ENCODE measurements at regions of chr13 and their contacts with region 1.

Region 1: DNA sequence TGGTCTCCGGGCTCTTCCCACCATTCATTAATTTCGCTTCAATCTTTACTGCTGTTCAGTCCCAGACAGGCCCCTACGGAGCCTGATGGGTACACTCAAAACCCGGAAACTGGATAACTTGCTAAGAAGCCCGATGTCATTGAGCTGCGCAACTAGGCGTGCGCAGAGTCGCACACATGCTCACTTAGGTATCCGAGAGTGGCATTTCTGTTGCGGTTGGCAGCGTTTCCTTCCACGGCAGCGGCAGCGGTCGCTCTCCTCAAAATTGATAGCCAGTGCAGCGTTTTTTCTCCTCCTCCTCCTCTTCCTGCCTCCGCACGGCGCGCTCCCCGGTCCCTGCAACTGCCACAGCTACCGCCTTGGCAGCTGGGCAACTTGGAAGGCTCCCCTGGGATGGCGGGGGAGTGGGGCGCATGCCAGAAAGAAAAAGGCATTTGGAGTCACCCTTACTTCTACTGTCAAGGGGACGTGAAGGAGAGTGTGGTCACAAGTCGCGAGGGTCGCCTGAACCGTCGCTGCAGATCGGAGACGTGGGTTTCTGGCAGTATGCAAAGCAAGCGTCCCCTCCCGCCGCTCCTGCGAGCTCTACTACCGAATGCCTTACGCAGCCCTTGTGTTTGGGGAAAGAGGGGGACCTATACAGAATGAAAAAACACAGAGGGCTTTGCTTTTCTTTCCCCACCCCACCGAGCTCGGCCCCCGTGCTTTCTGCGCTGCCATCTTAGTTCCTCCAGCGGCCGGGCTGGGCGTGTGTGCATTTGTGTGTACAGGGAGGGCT is 2.4 kb upstream of the MYCBP2 start:
- DNase-seq: peak; percentile 96
- ATAC-seq: peak; percentile 60
- H3K4me3 ChIP-seq: peak overlapping the region; percentile 80 to 99 (median 92)
- H3K4me3 Mint-ChIP-seq: peak overlapping the region; percentile 94
- H3K27ac ChIP-seq: peak overlapping the region; percentile 84 to 91
- H3K27ac Mint-ChIP-seq: peak overlapping the region; percentile 97
- H3K4me1 ChIP-seq: peaks cover 31 to 39% of the 10 kb centered on the region in 2 donors
- H3K4me1 Mint-ChIP-seq: peaks cover 57% of the 10 kb centered on the region
- H3K27me3 ChIP-seq: no peaks in the 10 kb centered on the region
- H3K27me3 Mint-ChIP-seq: no peaks in the 10 kb centered on the region
- CTCF ChIP-seq: no peak

Region 2: GRCh38 chr13:76886292-76887075 is 442.8 kb before region 1 on chr13 and contains the start of gene KCTD12:
- CTCF ChIA-PET with region 1: no interaction called
- POLR2A ChIA-PET with region 1: no interaction called
- intact Hi-C with region 1: loop called (anchors 10 kb)
- DNase-seq: peak; percentile 90
- ATAC-seq: peak; percentile 79
- H3K4me3 ChIP-seq: peak within 1 kb of the TSS; percentile 45 to 67 (median 64)
- H3K4me3 Mint-ChIP-seq: peak within 1 kb of the TSS; percentile 96
- H3K27ac ChIP-seq: peak within 1 kb of the TSS in 1 of 2 donors; percentile 40
- H3K27ac Mint-ChIP-seq: peak within 1 kb of the TSS; percentile 88
- H3K4me1 ChIP-seq: peaks cover 7 to 24% of the 10 kb centered on the region in 2 donors
- H3K4me1 Mint-ChIP-seq: peaks cover 28% of the 10 kb centered on the region
- H3K27me3 ChIP-seq: peaks cover 0 to 3% (median 0%) of the 10 kb centered on the region in 4 experiments
- H3K27me3 Mint-ChIP-seq: peaks cover 3% of the 10 kb centered on the region
- CTCF ChIP-seq: peak; percentile 41
- total RNA-seq, gene KCTD12: 6.2 TPM in 2 replicates

Region 3: DNA sequence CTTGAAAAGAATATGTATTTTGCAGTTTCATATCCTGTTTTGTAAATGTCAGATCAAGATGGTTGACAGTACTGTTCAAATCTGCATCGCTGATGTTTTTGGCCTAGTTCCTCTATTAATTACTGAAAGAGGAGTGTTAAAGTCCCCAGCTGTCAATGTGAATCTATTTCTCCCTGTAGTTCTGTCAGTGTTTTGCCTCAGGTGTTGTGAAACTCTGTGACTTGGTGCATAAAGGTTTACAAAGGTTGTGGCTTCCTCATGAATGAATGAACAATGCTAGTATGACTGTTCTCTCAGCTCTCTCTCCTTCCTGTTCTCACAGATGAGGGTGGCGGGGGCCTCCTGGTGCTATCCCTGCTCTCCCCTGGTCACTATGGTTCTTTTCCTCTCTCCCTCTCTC is 144.9 kb before region 1 on chr13:
- CTCF ChIA-PET with region 1: no interaction called
- POLR2A ChIA-PET with region 1: no interaction called
- intact Hi-C with region 1: loop called (anchors 1 kb)
- DNase-seq: peak; percentile 79
- ATAC-seq: peak; percentile 94
- H3K4me3 ChIP-seq: no peak overlapping the region
- H3K4me3 Mint-ChIP-seq: peak overlapping the region; percentile 48
- H3K27ac ChIP-seq: peak overlapping the region; percentile 47 to 78
- H3K27ac Mint-ChIP-seq: peak overlapping the region; percentile 90
- H3K4me1 ChIP-seq: peaks cover 12 to 15% of the 10 kb centered on the region in 2 donors
- H3K4me1 Mint-ChIP-seq: peaks cover 23% of the 10 kb centered on the region
- H3K27me3 ChIP-seq: no peaks in the 10 kb centered on the region
- H3K27me3 Mint-ChIP-seq: no peaks in the 10 kb centered on the region
- CTCF ChIP-seq: no peak

Region 4: DNA sequence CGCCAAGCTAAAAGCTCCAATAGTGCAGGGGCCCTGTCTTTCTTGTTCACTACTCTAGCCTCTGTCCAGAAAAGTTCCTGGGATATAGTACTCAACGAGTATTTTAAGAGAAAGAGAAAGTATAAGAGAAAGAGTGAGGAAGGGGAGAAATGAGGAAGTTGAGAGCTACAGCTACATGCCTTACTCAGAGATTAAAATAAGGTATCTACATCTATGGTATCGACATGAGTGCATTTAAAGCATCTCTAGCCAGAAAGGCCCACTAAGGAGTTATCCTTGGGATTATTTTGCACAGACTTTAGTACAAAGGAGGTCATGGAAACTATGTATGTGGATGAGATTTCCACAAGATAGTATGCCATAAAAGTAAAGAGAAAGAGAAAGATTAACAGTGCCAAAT is 30.9 kb before region 1 on chr13:
- CTCF ChIA-PET with region 1: interaction called, 24 read pairs
- POLR2A ChIA-PET with region 1: interaction called, 4 read pairs
- intact Hi-C with region 1: loop called (anchors 2 kb)
- DNase-seq: peak; percentile 69
- ATAC-seq: peak; percentile 80
- H3K4me3 ChIP-seq: peak overlapping the region; percentile 35 to 61 (median 43)
- H3K4me3 Mint-ChIP-seq: peak overlapping the region; percentile 83
- H3K27ac ChIP-seq: peak overlapping the region; percentile 66 to 71
- H3K27ac Mint-ChIP-seq: peak overlapping the region; percentile 85
- H3K4me1 ChIP-seq: peaks cover 40 to 60% of the 10 kb centered on the region in 2 donors
- H3K4me1 Mint-ChIP-seq: peaks cover 64% of the 10 kb centered on the region
- H3K27me3 ChIP-seq: no peaks in the 10 kb centered on the region
- H3K27me3 Mint-ChIP-seq: no peaks in the 10 kb centered on the region
- CTCF ChIP-seq: no peak

Region 5: DNA sequence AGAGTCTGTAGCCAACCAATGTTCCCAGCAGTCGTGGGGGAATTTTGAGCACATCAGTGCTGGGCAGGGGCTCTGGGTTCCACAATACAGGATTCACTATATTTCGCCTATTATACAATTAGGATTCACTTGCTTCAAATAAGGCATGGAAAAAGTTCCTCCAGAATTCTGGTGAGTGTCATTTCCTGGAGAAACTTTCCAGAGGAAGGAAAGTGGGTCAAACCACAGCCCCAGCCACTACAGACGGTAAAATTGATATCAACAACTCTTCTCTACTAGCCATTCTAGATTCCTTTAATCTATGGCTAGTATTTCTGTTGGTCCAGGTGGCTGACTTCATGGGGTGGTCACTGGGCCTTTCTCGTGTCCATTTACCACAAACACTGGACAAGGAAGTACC is 12.9 kb before region 1 on chr13:
- CTCF ChIA-PET with region 1: interaction called, 12 read pairs
- POLR2A ChIA-PET with region 1: interaction called, 3 read pairs
- intact Hi-C with region 1: no loop called
- DNase-seq: no peak
- ATAC-seq: no peak
- H3K4me3 ChIP-seq: no peak overlapping the region
- H3K4me3 Mint-ChIP-seq: no peak overlapping the region
- H3K27ac ChIP-seq: peak overlapping the region in 1 of 2 donors; percentile 38
- H3K27ac Mint-ChIP-seq: peak overlapping the region; percentile 23
- H3K4me1 ChIP-seq: peaks cover 39 to 63% of the 10 kb centered on the region in 2 donors
- H3K4me1 Mint-ChIP-seq: peaks cover 81% of the 10 kb centered on the region
- H3K27me3 ChIP-seq: no peaks in the 10 kb centered on the region
- H3K27me3 Mint-ChIP-seq: no peaks in the 10 kb centered on the region
- CTCF ChIP-seq: no peak

Region 6: GRCh38 chr13:77429320-77430142 is 100.2 kb after region 1 on chr13:
- CTCF ChIA-PET with region 1: interaction called, 5 read pairs
- POLR2A ChIA-PET with region 1: interaction called, 6 read pairs
- intact Hi-C with region 1: loop called (anchors 1 kb)
- DNase-seq: peak; percentile 79
- ATAC-seq: peak; percentile 89
- H3K4me3 ChIP-seq: peak overlapping the region in 1 of 5 experiments; percentile 22
- H3K4me3 Mint-ChIP-seq: peak overlapping the region; percentile 74
- H3K27ac ChIP-seq: peak overlapping the region; percentile 60 to 78
- H3K27ac Mint-ChIP-seq: peak overlapping the region; percentile 95
- H3K4me1 ChIP-seq: peaks cover 15 to 21% of the 10 kb centered on the region in 2 donors
- H3K4me1 Mint-ChIP-seq: peaks cover 32% of the 10 kb centered on the region
- H3K27me3 ChIP-seq: no peaks in the 10 kb centered on the region
- H3K27me3 Mint-ChIP-seq: no peaks in the 10 kb centered on the region
- CTCF ChIP-seq: no peak